Right lobe of liver (tissue), 6 donors: ENCODE measurements at regions of chr4 and their contacts with region 1.

Region 1: GRCh38 chr4:76504613-76505465 is 69.8 kb downstream of the SHROOM3 start:
- DNase-seq: no peak
- ATAC-seq: peak; percentile 82 to 90 (median 89)
- H3K4me3 ChIP-seq: no peak overlapping the region
- H3K27ac ChIP-seq: no peak overlapping the region
- H3K4me1 ChIP-seq: peaks cover 0 to 7% (median 2%) of the 10 kb centered on the region in 4 donors
- H3K27me3 ChIP-seq: no peaks in the 10 kb centered on the region
- CTCF ChIP-seq: peak; percentile 67 to 80 (median 68)
- POLR2A ChIP-seq: no peak

Region 2: GRCh38 chr4:75831856-75832405 is 672.9 kb before region 1 on chr4:
- intact Hi-C with region 1: no loop called
- DNase-seq: no peak
- ATAC-seq: peak; percentile 32 to 76 (median 62)
- H3K4me3 ChIP-seq: no peak overlapping the region
- H3K27ac ChIP-seq: no peak overlapping the region
- H3K4me1 ChIP-seq: no peaks in the 10 kb centered on the region
- H3K27me3 ChIP-seq: no peaks in the 10 kb centered on the region
- CTCF ChIP-seq: no peak
- POLR2A ChIP-seq: no peak

Region 3: GRCh38 chr4:76430519-76431388 is 74.1 kb before region 1 on chr4:
- intact Hi-C with region 1: loop called in 1 of 2 experiments (anchors 5 kb)
- DNase-seq: no peak
- ATAC-seq: peak; percentile 88 to 92 (median 91)
- H3K4me3 ChIP-seq: no peak overlapping the region
- H3K27ac ChIP-seq: peak overlapping the region in 2 of 3 donors; percentile 20 to 57
- H3K4me1 ChIP-seq: peaks cover 0 to 4% (median 0%) of the 10 kb centered on the region in 4 donors
- H3K27me3 ChIP-seq: no peaks in the 10 kb centered on the region
- CTCF ChIP-seq: peak; percentile 67 to 70 (median 69)
- POLR2A ChIP-seq: no peak